ENCODE measurements at regions of chr4 and their contacts with region 1.

Region 1: GRCh38 chr4:24778464-24779225 is 16.7 kb upstream of the SOD3 start:
- DNase-seq: peak in 1 of 2 donors; percentile 72
- ATAC-seq: peak; percentile 78
- H3K4me3 ChIP-seq: no peak overlapping the region
- H3K27ac ChIP-seq: peak overlapping the region in 1 of 2 donors; percentile 26
- H3K4me1 ChIP-seq: peaks cover 2 to 6% of the 10 kb centered on the region in 2 donors
- H3K27me3 ChIP-seq: no peaks in the 10 kb centered on the region

Region 2: DNA sequence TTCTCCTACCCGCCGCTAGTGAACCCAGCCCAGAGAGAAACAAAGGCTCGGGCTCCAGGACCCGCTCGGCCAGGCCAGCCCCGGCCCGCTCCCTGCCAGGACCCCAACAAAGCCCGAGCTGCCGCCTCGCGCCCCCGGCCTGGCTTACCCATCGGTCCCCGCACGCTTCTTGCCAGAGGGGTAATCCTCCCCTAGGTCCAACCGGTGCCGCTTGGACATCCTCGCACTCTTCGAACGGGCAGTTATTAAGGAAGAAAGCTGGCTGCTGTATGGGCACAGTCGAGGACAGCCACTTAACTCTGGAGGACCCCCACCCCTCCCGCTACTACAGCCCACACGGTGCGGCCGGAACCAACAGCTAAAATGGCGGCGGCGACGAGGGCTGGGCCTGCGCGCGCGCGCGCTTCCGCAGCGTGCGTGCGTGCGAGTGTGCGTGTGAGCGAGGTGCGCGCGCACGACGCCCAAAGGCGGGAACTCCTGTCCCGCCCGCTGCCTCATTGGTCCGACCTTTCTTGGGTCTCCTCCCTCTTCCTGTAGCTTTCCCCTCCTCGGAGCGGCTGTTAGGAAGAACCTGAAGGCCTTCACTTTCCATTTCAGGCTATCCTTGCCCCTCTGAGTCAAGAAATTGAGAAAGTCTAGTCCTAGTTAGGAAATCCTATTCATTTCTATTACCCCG is 194.3 kb before region 1 on chr4 and contains the start of gene DHX15:
- intact Hi-C with region 1: loop called in 1 of 2 experiments (anchors 5 kb)
- DNase-seq: peak; percentile 97 to 98
- ATAC-seq: peak; percentile 99
- H3K4me3 ChIP-seq: peak within 1 kb of the TSS; percentile 88 to 98
- H3K27ac ChIP-seq: peak within 1 kb of the TSS; percentile 89 to 92
- H3K4me1 ChIP-seq: no peaks in the 10 kb centered on the region
- H3K27me3 ChIP-seq: no peaks in the 10 kb centered on the region
- total RNA-seq, gene DHX15: 107 to 113 TPM

Region 3: GRCh38 chr4:24686871-24687680 is 91.6 kb before region 1 on chr4:
- intact Hi-C with region 1: loop called in 1 of 2 experiments (anchors 5 kb)
- DNase-seq: no peak
- ATAC-seq: peak; percentile 24
- H3K4me3 ChIP-seq: no peak overlapping the region
- H3K27ac ChIP-seq: no peak overlapping the region
- H3K4me1 ChIP-seq: no peaks in the 10 kb centered on the region
- H3K27me3 ChIP-seq: no peaks in the 10 kb centered on the region

Measured in aorta (tissue), 5 donors.